ENCODE measurements at regions of chr10 and their contacts with region 1.

Region 1: GRCh38 chr10:114550756-114551635 is 107.1 kb downstream of the ABLIM1 start:
- DNase-seq: peak; percentile 30 to 78 (median 60)
- H3K4me3 ChIP-seq: no peak overlapping the region
- H3K27ac ChIP-seq: peak overlapping the region in 4 of 5 donors; percentile 64 to 89 (median 70)
- H3K4me1 ChIP-seq: peaks cover 12 to 28% of the 10 kb centered on the region in 2 donors
- H3K27me3 ChIP-seq: no peaks in the 10 kb centered on the region
- CTCF ChIP-seq: peak; percentile 33 to 71 (median 54)
- POLR2A ChIP-seq: no peak

Region 2: GRCh38 chr10:114674346-114674745 is 123.3 kb after region 1 on chr10:
- intact Hi-C with region 1: no loop called
- DNase-seq: no peak
- H3K4me3 ChIP-seq: no peak overlapping the region
- H3K27ac ChIP-seq: no peak overlapping the region
- H3K4me1 ChIP-seq: peaks cover 0 to 4% of the 10 kb centered on the region in 2 donors
- H3K27me3 ChIP-seq: no peaks in the 10 kb centered on the region
- CTCF ChIP-seq: no peak
- POLR2A ChIP-seq: no peak

Region 3: GRCh38 chr10:114703377-114704107 is 152.5 kb after region 1 on chr10:
- intact Hi-C with region 1: loop called (anchors 10 kb)
- DNase-seq: peak in 1 of 7 donors; percentile 30
- H3K4me3 ChIP-seq: no peak overlapping the region
- H3K27ac ChIP-seq: no peak overlapping the region
- H3K4me1 ChIP-seq: peaks cover 3 to 15% of the 10 kb centered on the region in 2 donors
- H3K27me3 ChIP-seq: no peaks in the 10 kb centered on the region
- CTCF ChIP-seq: peak; percentile 48 to 84 (median 71)
- POLR2A ChIP-seq: no peak

Region 4: GRCh38 chr10:114801411-114801813 is 250.4 kb after region 1 on chr10:
- intact Hi-C with region 1: no loop called
- DNase-seq: no peak
- H3K4me3 ChIP-seq: no peak overlapping the region
- H3K27ac ChIP-seq: no peak overlapping the region
- H3K4me1 ChIP-seq: no peaks in the 10 kb centered on the region
- H3K27me3 ChIP-seq: no peaks in the 10 kb centered on the region
- CTCF ChIP-seq: no peak
- POLR2A ChIP-seq: no peak

Region 5: DNA sequence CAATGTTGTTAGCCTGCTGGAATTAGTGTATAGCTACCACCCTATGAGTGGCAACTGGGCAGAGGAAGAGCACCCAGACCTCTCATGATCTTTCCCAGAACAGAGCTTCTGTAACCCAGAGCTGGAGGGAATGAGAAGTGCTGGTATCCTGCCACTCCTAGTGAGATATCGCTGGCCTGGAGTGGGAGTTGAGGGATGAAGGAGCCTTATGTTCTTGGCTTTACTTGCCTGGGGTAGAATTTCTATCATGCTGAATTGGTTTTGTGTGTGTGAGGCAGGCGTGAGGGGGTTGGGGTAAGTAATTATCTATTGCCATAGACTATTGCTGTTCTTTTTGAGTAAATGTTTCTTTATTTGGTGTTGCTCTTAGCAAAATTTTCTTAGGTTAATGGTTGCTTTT is 688.8 kb after region 1 on chr10:
- intact Hi-C with region 1: no loop called
- DNase-seq: no peak
- H3K4me3 ChIP-seq: no peak overlapping the region
- H3K27ac ChIP-seq: no peak overlapping the region
- H3K4me1 ChIP-seq: no peaks in the 10 kb centered on the region
- H3K27me3 ChIP-seq: no peaks in the 10 kb centered on the region
- CTCF ChIP-seq: no peak
- POLR2A ChIP-seq: no peak

Measured in adrenal gland (tissue), 19 donors.